Activated B cell treated with CpG ODN at 0.5 μM for 24 hours (primary cell): ENCODE measurements at regions of chr17 and their contacts with region 1.

Region 1: DNA sequence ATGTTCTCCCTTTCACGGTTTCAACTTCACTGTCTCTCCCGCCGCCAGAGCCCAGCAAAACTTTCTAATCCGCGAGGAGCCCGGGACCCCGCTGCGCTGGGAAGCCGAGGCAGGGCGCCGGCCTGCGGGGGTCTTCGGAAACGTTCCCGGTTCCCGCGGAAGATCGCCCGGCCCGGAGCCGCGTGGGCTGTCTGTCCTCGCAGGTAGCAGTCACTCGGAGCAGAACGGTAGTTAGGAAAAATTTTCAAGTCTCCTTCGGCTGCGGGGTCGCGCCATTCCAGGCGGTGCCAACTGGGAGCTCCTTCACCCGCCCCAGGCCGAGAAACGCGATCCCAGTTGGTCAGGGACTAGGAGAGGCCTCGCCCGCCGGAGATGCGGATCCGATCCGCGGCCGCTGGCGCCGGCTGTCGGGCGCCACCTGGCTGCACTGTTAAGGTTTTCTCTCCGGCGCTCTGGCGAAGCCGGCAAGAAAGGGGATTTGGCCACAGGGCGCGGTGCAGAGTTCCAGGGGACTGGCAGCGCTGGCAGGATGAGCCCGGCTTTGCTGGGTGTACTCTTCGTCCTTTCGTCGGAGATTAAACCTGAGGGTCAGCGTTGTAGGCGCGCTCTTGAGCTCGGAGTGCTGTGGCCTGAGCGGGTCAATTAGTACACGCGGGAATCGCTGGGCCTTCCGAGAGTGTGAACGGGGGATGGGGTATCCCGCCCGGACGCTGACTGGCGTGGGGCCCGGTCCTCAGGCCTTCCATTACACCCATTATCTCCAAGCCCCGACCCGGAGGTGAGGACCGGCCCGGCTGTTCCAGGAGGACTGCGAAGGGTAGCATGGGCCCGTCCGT is 135.4 kb downstream of the KCNJ12 start:
- DNase-seq: peak; percentile 63
- ATAC-seq: peak; percentile 80
- H3K4me3 Mint-ChIP-seq: peak overlapping the region; percentile 80
- H3K27ac Mint-ChIP-seq: no peak overlapping the region
- H3K4me1 Mint-ChIP-seq: peaks cover 26% of the 10 kb centered on the region
- H3K27me3 Mint-ChIP-seq: peaks cover 17% of the 10 kb centered on the region
- CTCF ChIP-seq: no peak

Region 2: GRCh38 chr17:21019976-21020586 is 491.5 kb before region 1 on chr17:
- CTCF ChIA-PET with region 1: interaction called, 4 read pairs
- POLR2A ChIA-PET with region 1: interaction called, 3 read pairs
- intact Hi-C with region 1: loop called (anchors 1 kb)
- DNase-seq: no peak
- ATAC-seq: peak; percentile 79
- H3K4me3 Mint-ChIP-seq: peak overlapping the region; percentile 17
- H3K27ac Mint-ChIP-seq: peak overlapping the region; percentile 81
- H3K4me1 Mint-ChIP-seq: peaks cover 42% of the 10 kb centered on the region
- H3K27me3 Mint-ChIP-seq: no peaks in the 10 kb centered on the region
- CTCF ChIP-seq: no peak

Region 3: DNA sequence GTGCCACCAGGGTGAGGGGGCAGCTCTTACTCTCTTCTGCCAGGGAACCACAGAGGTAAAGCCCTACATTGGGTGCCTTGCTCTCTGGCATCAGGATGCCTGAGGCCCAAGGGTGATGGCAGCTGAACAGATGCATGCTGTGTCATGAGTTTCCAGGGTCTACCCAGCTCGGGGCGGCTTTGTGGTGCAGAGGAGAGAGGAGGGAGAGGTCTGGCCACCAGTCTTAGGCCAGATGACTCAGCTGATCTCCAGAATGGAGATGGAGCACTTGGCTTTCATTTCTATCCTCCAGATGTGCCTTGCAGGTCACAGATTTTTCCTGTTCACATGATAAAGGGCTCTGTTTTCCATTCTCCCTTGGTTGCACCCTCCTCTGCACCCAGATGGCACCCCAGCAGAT is 445.2 kb before region 1 on chr17:
- CTCF ChIA-PET with region 1: no interaction called
- POLR2A ChIA-PET with region 1: no interaction called
- intact Hi-C with region 1: no loop called
- DNase-seq: no peak
- ATAC-seq: no peak
- H3K4me3 Mint-ChIP-seq: no peak overlapping the region
- H3K27ac Mint-ChIP-seq: no peak overlapping the region
- H3K4me1 Mint-ChIP-seq: peaks cover 15% of the 10 kb centered on the region
- H3K27me3 Mint-ChIP-seq: no peaks in the 10 kb centered on the region
- CTCF ChIP-seq: no peak

Region 4: DNA sequence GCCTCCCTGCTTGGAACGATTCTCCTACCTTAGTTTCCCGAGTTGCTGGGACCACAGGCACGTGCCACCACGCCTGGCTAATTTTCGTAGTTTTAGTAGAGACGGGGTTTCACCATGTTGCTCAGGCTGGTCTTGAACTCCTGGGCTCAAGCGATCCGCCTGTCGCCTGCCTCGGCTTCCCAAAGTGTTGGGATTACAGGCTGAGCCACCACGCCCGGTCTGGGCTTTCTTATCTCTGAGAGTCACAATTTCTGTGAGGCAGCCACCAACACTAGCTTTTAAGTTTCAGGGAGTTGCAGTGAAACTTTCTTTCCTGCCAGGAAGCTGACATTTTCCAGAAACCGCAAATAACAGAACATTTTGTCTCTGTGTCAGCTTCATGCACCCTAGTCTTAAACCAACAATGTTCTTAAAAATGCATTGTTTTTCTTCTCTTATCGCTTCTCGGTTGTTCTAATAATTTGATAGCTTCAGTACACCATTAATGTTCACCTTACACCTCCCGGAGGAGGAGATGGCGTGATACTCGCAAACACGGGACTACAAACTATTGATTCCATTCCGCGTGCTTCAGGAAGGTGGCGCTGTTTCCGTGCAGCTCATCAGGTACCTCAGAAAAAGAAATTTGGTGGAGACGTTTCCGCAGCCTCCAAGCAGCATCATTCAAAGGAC is 392.2 kb before region 1 on chr17:
- CTCF ChIA-PET with region 1: interaction called, 84 read pairs
- POLR2A ChIA-PET with region 1: interaction called, 8 read pairs
- intact Hi-C with region 1: loop called (anchors 1 kb)
- DNase-seq: peak; percentile 41
- ATAC-seq: peak; percentile 93
- H3K4me3 Mint-ChIP-seq: no peak overlapping the region
- H3K27ac Mint-ChIP-seq: no peak overlapping the region
- H3K4me1 Mint-ChIP-seq: peaks cover 6% of the 10 kb centered on the region
- H3K27me3 Mint-ChIP-seq: peaks cover 9% of the 10 kb centered on the region
- CTCF ChIP-seq: no peak

Region 5: GRCh38 chr17:21275579-21276263 is 235.9 kb before region 1 on chr17:
- CTCF ChIA-PET with region 1: interaction called, 81 read pairs
- POLR2A ChIA-PET with region 1: no interaction called
- intact Hi-C with region 1: loop called (anchors 1 kb)
- DNase-seq: peak; percentile 99
- ATAC-seq: peak; percentile 92
- H3K4me3 Mint-ChIP-seq: peak overlapping the region; percentile 88
- H3K27ac Mint-ChIP-seq: peak overlapping the region; percentile 88
- H3K4me1 Mint-ChIP-seq: peaks cover 34% of the 10 kb centered on the region
- H3K27me3 Mint-ChIP-seq: no peaks in the 10 kb centered on the region
- CTCF ChIP-seq: no peak

Region 6: GRCh38 chr17:21318439-21318838 is 193.1 kb before region 1 on chr17:
- CTCF ChIA-PET with region 1: no interaction called
- POLR2A ChIA-PET with region 1: no interaction called
- intact Hi-C with region 1: loop called (anchors 10 kb)
- DNase-seq: no peak
- ATAC-seq: no peak
- H3K4me3 Mint-ChIP-seq: no peak overlapping the region
- H3K27ac Mint-ChIP-seq: no peak overlapping the region
- H3K4me1 Mint-ChIP-seq: peaks cover 7% of the 10 kb centered on the region
- H3K27me3 Mint-ChIP-seq: no peaks in the 10 kb centered on the region
- CTCF ChIP-seq: no peak

Region 7: DNA sequence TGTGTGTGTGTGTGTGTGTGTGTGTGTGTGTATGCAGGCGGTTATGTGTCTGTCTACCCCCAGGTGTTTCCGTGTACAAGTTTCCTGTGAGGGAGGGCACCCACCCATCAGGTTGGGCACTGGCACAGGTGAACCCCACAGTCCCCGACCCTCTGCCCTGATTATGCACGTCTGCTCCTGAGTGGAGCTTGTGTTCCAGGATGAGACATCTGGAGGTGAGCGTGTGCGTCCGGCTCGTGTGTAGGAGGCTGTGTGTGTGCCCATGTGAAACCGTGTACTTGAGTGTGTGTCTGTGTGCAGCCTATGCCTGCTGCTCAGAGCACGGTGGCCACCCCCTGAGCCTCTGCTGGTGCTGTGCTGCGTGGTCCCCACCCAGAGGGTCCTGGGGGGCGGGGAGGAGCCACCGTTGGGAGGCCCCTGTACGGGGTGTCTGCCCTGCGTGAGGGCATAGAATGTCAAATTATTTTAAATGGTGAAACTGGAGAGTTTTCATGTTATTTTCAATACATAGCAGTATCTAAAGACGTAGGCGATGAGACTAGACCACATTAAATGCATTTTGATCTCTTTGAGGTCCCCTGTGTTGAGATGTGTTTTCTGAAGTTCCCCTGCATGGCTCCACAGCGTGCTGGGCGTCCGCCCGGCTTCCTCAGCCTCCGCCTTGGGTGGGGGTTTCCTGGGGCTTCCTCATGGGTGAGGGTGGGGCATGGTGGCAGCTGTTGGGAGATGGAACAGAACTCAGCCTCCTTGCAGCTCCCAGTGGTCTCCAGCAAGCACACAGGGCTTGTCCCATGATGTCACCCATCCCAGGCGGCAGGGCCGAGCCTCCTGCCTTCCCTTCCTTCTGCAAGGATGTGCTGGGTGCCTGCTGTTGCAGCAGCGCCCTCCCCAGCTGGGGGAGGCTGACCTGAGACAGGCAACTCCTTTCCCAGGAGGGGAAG is 92.0 kb before region 1 on chr17:
- CTCF ChIA-PET with region 1: no interaction called
- POLR2A ChIA-PET with region 1: no interaction called
- intact Hi-C with region 1: no loop called
- DNase-seq: no peak
- ATAC-seq: no peak
- H3K4me3 Mint-ChIP-seq: no peak overlapping the region
- H3K27ac Mint-ChIP-seq: no peak overlapping the region
- H3K4me1 Mint-ChIP-seq: no peaks in the 10 kb centered on the region
- H3K27me3 Mint-ChIP-seq: no peaks in the 10 kb centered on the region
- CTCF ChIP-seq: no peak

Region 8: DNA sequence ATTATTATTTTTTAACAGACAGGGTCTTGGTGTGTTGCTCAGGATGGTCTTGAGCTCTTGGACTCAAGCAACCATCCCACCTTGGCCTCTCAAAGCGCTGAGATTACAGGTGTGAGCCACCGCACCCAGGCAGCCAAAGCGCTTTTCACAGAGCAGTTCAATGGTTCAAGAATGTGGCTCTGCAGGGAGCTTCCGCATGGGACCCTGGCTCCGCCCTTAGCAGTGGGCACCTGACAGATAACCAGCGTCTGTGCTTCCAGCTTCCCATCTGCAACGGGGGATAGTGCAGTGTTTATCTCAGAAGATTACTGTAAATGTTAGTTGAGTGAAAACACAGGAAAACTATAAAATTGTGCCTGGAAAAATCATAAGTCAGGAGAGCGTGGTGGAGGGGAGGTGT is 36.0 kb before region 1 on chr17:
- CTCF ChIA-PET with region 1: no interaction called
- POLR2A ChIA-PET with region 1: no interaction called
- intact Hi-C with region 1: no loop called
- DNase-seq: no peak
- ATAC-seq: no peak
- H3K4me3 Mint-ChIP-seq: no peak overlapping the region
- H3K27ac Mint-ChIP-seq: no peak overlapping the region
- H3K4me1 Mint-ChIP-seq: peaks cover 2% of the 10 kb centered on the region
- H3K27me3 Mint-ChIP-seq: peaks cover 33% of the 10 kb centered on the region
- CTCF ChIP-seq: no peak

Region 9: DNA sequence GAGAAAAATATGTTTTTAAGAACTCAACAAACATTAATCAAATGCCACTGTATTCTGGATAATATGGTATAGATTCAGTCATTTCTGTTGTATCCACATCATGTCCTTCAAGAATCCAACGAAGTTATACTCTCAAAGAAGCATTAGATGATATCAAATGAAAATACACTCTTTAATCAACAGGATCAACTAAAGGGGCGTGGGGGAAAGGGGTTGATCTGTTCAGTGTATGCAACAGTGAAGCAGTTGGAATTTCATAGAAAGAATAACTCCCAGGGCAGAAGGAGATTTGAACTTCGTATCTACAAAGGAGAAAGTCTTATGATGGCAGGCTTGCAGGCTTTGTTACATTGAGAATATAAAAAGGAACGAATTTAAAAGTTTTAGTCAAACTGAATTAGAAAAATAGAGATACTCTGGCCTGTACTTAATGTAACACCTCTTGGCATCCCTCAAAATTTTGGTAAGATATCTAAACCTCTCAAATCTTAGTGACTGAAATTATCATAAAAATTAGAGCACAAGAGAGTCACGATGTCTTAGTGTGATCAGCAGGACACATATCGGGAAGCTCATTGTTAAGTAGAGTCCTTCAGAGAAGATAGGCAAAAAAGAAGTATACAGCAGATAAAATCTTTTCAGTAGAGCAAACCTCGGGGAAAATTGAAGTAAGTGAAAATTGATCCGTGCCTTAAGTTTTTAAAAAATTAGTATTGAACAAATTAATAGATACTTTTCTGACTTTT is 612.1 kb after region 1 on chr17:
- CTCF ChIA-PET with region 1: no interaction called
- POLR2A ChIA-PET with region 1: no interaction called
- intact Hi-C with region 1: no loop called
- DNase-seq: no peak
- ATAC-seq: no peak
- H3K4me3 Mint-ChIP-seq: no peak overlapping the region
- H3K27ac Mint-ChIP-seq: no peak overlapping the region
- H3K4me1 Mint-ChIP-seq: no peaks in the 10 kb centered on the region
- H3K27me3 Mint-ChIP-seq: no peaks in the 10 kb centered on the region
- CTCF ChIP-seq: no peak